ENCODE measurements at regions of chr2 and their contacts with region 1.

Region 1: DNA sequence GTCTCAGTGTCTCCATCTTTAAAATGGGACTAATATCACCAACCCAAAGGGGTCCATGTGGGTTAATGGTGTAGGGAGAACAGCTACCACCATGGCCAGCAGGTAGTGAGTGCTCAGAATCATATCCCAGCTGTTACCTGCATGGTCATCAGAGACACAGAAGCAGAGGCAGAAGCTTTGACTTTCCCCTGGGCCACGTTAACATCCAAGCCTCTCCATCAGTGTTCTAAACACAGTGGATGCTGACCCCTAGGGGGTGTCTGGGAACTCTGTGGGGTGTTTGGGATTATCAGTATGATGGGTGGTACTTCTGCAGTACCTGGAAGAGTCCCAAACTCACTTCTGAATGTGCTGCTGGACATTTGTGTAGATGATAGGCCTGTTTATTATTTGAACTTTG is 93.6 kb downstream of the GYPC start:
- DNase-seq: no peak
- ATAC-seq: no peak
- H3K4me3 Mint-ChIP-seq: no peak overlapping the region
- H3K27ac Mint-ChIP-seq: no peak overlapping the region
- H3K4me1 Mint-ChIP-seq: no peaks in the 10 kb centered on the region
- H3K27me3 Mint-ChIP-seq: peaks cover 10% of the 10 kb centered on the region
- CTCF ChIP-seq: no peak

Region 2: DNA sequence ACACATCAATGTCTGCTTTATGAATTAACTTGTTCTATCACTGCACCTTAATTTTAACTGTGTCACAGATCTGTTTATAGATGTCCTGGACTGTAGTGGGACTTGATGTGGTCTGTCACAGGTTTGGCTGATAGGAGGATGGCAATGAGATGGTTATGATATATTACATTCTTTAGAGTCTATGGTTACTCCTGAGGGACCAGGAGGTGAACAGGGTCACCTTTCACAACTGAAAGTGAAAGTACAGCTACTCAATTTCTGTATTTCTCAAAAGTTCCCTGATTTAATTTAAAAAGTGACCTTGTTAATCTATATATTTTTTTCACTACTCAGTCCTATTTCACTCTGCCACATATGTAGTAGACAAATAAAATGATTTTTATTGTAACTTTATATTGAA is 1377.7 kb before region 1 on chr2:
- CTCF ChIA-PET with region 1: no interaction called
- POLR2A ChIA-PET with region 1: no interaction called
- intact Hi-C with region 1: no loop called
- DNase-seq: no peak
- ATAC-seq: no peak
- H3K4me3 Mint-ChIP-seq: no peak overlapping the region
- H3K27ac Mint-ChIP-seq: no peak overlapping the region
- H3K4me1 Mint-ChIP-seq: no peaks in the 10 kb centered on the region
- H3K27me3 Mint-ChIP-seq: no peaks in the 10 kb centered on the region
- CTCF ChIP-seq: no peak

Region 3: GRCh38 chr2:126359494-126359893 is 390.0 kb before region 1 on chr2:
- CTCF ChIA-PET with region 1: interaction called, 3 read pairs
- POLR2A ChIA-PET with region 1: no interaction called
- intact Hi-C with region 1: loop called (anchors 1 kb)
- DNase-seq: no peak
- ATAC-seq: peak; percentile 21
- H3K4me3 Mint-ChIP-seq: no peak overlapping the region
- H3K27ac Mint-ChIP-seq: no peak overlapping the region
- H3K4me1 Mint-ChIP-seq: no peaks in the 10 kb centered on the region
- H3K27me3 Mint-ChIP-seq: peaks cover 1% of the 10 kb centered on the region
- CTCF ChIP-seq: no peak